Heart right ventricle (tissue), 16 donors: ENCODE measurements at regions of chr11 and their contacts with region 1.

Region 1: DNA sequence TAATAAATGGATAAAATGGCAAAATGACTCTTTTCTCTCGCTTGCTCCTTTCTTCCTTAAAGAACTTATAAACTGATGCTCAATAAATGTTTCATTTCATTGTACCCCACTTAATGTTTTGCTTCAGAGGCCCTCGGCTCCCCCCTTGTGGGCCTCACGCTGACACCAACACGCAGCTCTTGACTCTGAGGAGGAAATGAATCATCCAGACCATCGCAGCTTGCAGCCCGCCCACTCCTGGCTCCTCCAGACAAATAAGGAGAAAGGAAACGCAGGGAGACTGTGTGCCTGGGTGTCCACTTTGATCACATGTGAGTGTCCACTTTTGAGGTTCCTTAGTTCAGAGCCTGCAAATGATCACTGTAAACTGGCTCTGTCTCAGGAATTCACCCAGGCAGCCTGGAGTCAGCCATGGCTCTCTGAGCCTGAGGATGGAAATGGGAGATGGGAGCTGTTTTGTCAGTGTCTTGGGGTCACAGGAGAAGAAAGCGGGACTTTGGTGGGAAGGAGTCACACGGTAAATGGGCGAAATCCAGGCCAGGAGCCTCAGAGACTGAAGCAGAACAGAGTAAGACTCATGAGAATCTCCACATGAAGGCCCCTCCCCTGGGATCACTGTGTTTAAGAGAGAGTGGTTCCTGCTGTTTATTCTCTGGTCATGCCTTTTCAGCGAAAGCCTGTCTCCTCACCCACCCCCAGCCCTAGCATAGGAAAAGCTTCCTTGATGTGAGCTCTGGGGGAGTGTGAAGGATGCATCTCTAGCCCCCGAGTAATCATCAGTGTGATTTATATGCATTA is 96.5 kb downstream of the CWC15 start:
- DNase-seq: peak; percentile 62 to 84
- ATAC-seq: peak; percentile 81 to 97 (median 95)
- H3K4me3 ChIP-seq: no peak overlapping the region
- H3K27ac ChIP-seq: peak overlapping the region in 8 of 10 donors; percentile 59 to 79 (median 68)
- H3K4me1 ChIP-seq: peaks cover 3 to 36% (median 18%) of the 10 kb centered on the region in 9 donors
- H3K27me3 ChIP-seq: no peaks in the 10 kb centered on the region
- CTCF ChIP-seq: peak in 6 of 9 donors; percentile 30 to 61 (median 46)

Region 2: DNA sequence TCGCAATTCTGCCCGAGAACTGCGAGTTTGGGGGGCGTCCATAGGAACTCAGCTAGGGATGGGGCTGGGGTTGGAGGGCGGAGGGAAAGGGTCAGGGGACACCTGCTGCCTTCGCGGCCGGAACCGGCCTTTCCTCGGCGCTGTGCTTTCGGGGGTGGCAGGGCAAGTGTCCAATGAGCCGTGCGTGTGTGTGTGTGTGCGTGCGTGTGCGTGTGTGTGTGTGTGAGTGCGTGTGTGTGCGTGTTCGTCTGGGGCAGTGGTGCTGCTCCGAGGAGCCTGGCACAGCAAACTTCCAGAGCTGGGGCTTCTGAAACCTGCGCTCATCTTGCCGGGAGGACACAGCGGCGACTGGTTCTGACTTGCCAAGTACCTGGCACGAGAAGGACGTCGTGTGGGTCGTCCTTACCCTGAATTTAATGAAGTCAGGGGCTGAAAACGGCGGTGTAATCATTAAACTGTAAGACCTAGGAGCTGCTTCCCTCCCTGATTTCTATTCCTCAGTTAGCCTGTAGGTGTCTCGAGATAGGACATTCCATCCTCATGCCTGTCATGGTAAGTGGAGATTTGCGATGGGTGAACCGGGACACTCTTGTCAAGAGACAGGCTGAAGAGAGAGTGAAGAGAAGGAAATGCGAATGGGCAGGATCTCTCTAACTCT is 135.7 kb before region 1 on chr11:
- intact Hi-C with region 1: loop called in 1 of 10 experiments (anchors 10 kb)
- DNase-seq: peak; percentile 31
- ATAC-seq: peak; percentile 75 to 90 (median 82)
- H3K4me3 ChIP-seq: peak overlapping the region; percentile 44 to 76 (median 63)
- H3K27ac ChIP-seq: peak overlapping the region in 4 of 10 donors; percentile 29 to 61 (median 41)
- H3K4me1 ChIP-seq: peaks cover 0 to 25% (median 8%) of the 10 kb centered on the region in 9 donors
- H3K27me3 ChIP-seq: peaks cover 0 to 26% (median 0%) of the 10 kb centered on the region in 7 donors
- CTCF ChIP-seq: peak; percentile 30 to 69 (median 52)

Region 3: DNA sequence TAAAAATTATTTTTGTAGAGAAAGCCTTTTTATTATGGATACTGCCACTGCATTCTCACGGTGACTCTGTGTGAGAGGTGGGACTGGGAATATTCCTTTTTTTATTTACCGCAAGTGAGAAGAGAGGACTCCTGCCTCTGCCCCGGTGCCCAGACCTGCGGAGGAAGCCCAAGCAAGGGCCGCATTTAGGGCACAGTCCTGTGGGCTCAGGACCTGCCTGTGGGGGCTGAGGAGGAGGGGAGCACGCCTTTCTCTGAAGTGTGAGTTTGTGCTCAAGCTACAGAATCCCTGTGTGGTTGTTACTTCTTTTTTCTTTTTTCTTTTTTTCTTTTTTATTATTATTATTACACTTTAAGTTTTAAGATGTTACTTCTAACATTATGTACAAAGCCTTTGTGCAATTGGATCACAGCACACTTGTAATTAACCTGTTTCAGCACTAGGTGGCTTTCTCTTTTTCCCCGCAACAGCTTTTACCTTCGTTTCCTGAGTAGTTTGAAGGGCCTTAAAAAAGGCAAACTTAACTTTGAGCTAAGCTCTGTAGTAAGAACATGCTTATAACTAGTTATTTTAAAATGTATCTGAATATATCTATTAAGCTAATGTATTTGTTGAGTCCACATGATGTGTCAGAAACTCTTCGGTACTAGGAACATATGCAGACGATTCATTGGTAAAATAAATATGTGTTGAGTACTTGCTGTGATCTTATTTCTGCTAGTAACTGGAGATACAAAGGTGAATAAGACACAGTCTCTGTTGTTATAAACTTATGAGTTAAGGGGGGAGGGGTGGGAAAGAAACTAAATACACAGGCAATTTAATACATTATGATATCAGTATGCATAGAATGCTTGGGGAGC is 90.3 kb before region 1 on chr11:
- intact Hi-C with region 1: loop called in 1 of 10 experiments (anchors 10 kb)
- DNase-seq: no peak
- ATAC-seq: peak in 1 of 8 donors; percentile 39
- H3K4me3 ChIP-seq: no peak overlapping the region
- H3K27ac ChIP-seq: peak overlapping the region in 1 of 10 donors; percentile 5
- H3K4me1 ChIP-seq: peaks cover 6 to 98% (median 76%) of the 10 kb centered on the region in 9 donors
- H3K27me3 ChIP-seq: no peaks in the 10 kb centered on the region
- CTCF ChIP-seq: peak; percentile 44 to 73 (median 63)

Region 4: GRCh38 chr11:94910779-94911178 is 33.9 kb after region 1 on chr11:
- intact Hi-C with region 1: no loop called
- DNase-seq: no peak
- ATAC-seq: no peak
- H3K4me3 ChIP-seq: no peak overlapping the region
- H3K27ac ChIP-seq: no peak overlapping the region
- H3K4me1 ChIP-seq: no peaks in the 10 kb centered on the region
- H3K27me3 ChIP-seq: no peaks in the 10 kb centered on the region
- CTCF ChIP-seq: no peak

Region 5: DNA sequence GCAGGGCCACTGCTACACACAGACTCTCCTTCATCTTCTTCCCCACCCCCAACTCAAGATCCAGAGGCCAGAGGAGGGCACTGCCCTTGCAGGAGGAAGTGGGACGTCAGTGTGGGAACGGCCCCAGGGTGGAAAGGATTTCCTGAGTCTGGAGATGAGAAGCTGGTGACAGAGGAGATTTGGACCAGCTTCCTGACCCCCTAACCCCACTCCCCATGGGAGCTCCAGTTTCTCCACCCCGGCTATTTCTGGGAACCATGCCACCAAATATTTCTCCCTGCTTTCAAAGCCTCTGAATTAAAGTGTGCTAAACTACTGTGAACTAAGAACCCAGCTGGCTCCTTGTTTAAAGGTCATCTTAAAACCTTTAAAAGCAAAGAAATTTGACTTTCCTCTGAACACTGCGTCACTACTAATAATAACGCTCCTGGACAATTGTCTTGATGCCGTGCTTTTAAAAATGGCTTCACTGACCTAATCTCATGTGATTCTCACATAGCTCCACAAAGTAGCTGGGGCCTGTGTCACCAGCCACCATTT is 49.9 kb after region 1 on chr11:
- intact Hi-C with region 1: no loop called
- DNase-seq: peak; percentile 84 to 93
- ATAC-seq: peak; percentile 90 to 97 (median 93)
- H3K4me3 ChIP-seq: no peak overlapping the region
- H3K27ac ChIP-seq: peak overlapping the region; percentile 6 to 90 (median 79)
- H3K4me1 ChIP-seq: peaks cover 10 to 56% (median 40%) of the 10 kb centered on the region in 9 donors
- H3K27me3 ChIP-seq: no peaks in the 10 kb centered on the region
- CTCF ChIP-seq: no peak

Region 6: GRCh38 chr11:94958121-94958696 is 81.4 kb after region 1 on chr11:
- intact Hi-C with region 1: no loop called
- DNase-seq: no peak
- ATAC-seq: no peak
- H3K4me3 ChIP-seq: no peak overlapping the region
- H3K27ac ChIP-seq: no peak overlapping the region
- H3K4me1 ChIP-seq: no peaks in the 10 kb centered on the region
- H3K27me3 ChIP-seq: no peaks in the 10 kb centered on the region
- CTCF ChIP-seq: no peak

Region 7: DNA sequence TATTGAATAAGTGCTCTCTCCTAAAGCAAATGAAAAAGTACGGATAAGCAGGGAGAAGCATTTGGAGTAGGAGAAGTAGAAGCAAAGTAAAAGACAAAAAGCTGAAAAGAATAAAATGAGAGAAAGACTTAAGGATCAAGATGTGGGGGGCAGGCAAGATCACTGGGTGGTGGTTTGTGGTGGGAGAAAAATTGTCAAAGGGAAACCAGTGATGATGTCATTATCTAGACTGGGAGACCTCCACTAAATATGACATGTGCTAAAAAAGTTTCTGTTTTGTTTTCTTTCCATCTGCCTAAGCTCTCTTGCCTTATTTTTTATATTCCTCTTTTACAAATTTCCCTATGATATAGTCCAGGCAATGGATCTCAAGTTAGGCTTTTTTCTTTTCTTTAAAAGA is 1481.0 kb after region 1 on chr11:
- intact Hi-C with region 1: no loop called
- DNase-seq: no peak
- ATAC-seq: no peak
- H3K4me3 ChIP-seq: no peak overlapping the region
- H3K27ac ChIP-seq: no peak overlapping the region
- H3K4me1 ChIP-seq: no peaks in the 10 kb centered on the region
- H3K27me3 ChIP-seq: no peaks in the 10 kb centered on the region
- CTCF ChIP-seq: no peak